AG04450 (cell line): ENCODE measurements at regions of chr6 and their contacts with region 1.

Region 1: DNA sequence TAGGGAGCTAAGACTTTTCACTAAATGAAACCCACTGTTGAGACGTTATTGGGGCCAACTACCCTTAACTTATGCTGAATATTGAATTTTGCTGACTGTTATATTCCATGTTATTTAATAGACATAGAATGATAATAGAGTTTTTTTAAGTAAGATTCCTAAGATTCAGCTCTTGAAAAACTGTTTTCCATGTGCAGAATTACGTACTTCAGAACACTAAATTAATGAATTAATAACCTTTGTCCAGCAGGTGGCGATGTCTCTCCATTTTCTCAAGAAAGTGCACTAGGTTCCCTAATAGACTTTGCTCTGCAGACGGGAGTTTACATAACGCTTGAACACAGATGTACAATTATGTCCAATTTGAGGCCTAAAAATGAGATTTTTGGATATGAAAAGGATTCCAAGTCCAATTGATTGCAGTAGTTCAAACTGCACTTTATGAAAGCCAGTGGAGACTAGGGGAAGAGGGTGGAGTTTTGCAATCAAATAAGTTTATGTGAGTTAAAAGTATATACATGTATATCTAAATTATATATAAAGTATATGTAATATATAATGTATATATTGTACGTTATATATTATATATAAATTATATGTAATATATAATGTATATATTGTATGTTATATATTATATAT is 282.1 kb downstream of the UST start:
- DNase-seq: peak; percentile 87
- H3K4me3 ChIP-seq: no peak overlapping the region
- H3K27ac ChIP-seq: no peak overlapping the region
- H3K27me3 ChIP-seq: no peaks in the 10 kb centered on the region
- CTCF ChIP-seq: peak; percentile 60

Region 2: DNA sequence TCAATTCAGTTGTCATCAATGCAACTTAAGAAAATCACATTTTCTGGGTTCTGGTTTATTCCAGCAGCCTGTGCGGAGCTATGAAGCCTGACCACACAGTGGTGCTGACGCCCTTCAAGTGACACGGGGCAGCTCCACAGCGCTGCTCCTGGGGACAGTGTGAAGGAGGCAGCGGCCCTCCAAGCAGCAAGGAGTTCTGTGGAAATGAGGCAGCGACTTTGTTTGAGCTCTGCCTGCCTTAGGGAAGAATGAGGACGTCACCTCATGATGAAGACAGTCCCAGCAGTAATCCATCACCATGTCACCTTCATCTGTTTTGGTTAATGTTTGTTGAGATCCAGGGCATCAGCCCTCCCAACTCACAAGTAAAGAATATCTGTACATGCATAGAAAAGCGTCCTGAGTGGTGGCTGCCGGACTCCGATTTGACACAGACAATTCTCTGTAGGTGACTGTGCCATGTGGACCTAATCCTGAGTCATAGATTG is 450.6 kb before region 1 on chr6:
- CTCF ChIA-PET with region 1: interaction called, 69 read pairs
- POLR2A ChIA-PET with region 1: no interaction called
- DNase-seq: peak; percentile 37
- H3K4me3 ChIP-seq: no peak overlapping the region
- H3K27ac ChIP-seq: no peak overlapping the region
- H3K27me3 ChIP-seq: no peaks in the 10 kb centered on the region
- CTCF ChIP-seq: peak; percentile 80

Region 3: DNA sequence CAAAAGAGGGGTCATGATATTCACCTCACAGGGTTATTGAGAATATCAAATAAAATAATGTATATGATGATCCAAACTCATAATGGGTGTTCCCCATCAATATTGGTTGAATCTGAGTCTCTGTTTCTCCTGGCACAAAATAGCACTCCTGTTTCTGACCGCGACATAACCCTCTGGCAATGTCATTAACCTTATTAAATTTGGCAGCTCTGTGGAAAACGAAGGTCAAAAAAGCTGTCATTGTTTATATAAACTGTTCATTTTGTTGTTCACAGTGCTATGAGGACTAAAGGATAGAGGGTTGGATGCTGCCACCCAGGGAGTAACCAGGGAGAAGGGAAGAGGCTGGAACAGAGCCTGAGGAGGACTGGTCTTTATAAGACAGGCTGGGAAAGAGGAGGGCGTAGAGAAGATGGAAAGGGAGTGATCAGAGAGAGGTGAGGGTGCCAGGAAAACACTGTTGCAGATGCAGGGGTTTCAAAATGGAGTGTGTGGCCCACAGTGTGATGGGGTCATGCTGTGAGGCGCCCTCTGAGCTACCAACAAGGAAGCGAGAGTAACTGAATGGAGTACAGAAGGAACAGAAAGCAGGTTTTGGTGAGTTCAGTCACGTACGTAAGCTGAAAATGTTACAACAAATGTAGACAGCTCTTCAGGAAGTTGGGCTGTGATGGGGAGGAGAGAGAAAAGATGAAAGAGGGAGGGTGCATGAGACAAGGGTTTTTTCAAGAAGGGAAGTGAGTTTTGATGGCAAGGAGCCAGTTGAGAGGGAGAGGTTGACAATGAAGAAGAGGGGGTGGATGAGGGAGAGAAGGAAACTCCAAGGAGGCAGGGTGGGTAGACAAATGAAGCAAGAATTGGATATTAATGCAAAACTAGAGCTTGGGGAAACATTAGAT is 37.0 kb after region 1 on chr6:
- CTCF ChIA-PET with region 1: interaction called, 10 read pairs
- POLR2A ChIA-PET with region 1: interaction called, 11 read pairs
- DNase-seq: no peak
- H3K4me3 ChIP-seq: no peak overlapping the region
- H3K27ac ChIP-seq: no peak overlapping the region
- H3K27me3 ChIP-seq: no peaks in the 10 kb centered on the region
- CTCF ChIP-seq: no peak

Region 4: GRCh38 chr6:149082286-149082707 is 53.4 kb after region 1 on chr6:
- CTCF ChIA-PET with region 1: interaction called, 7 read pairs
- POLR2A ChIA-PET with region 1: interaction called, 12 read pairs
- DNase-seq: no peak
- H3K4me3 ChIP-seq: no peak overlapping the region
- H3K27ac ChIP-seq: no peak overlapping the region
- H3K27me3 ChIP-seq: no peaks in the 10 kb centered on the region
- CTCF ChIP-seq: peak; percentile 73

Region 5: DNA sequence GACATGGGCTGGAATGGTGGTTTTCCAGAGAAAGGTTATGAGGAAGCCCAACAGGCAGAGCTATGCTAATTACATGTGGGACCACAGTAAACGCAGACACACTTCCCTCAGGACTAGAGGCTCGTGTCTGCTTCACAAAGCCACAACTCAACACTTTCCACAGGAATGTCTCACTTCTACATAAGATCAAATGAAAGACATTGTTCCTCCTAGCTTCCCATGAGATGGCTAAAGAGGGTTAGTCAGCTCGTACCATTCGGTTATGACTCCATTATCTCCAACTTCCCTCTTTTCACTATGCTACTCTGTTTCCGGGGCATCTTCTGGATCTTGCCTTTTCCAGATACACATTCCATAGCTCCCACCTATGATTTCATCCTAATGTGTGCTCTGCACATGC is 485.0 kb after region 1 on chr6:
- CTCF ChIA-PET with region 1: interaction called, 128 read pairs
- POLR2A ChIA-PET with region 1: interaction called, 4 read pairs
- DNase-seq: no peak
- H3K4me3 ChIP-seq: no peak overlapping the region
- H3K27ac ChIP-seq: no peak overlapping the region
- H3K27me3 ChIP-seq: no peaks in the 10 kb centered on the region
- CTCF ChIP-seq: no peak